Endothelial cell of umbilical vein (primary cell): ENCODE measurements at regions of chr7 and their contacts with region 1.

Region 1: GRCh38 chr7:151315038-151315655 is 26.5 kb upstream of the NUB1 start:
- DNase-seq: peak; percentile 48
- H3K4me3 ChIP-seq: no peak overlapping the region
- H3K27ac ChIP-seq: no peak overlapping the region
- H3K4me1 ChIP-seq: no peaks in the 10 kb centered on the region
- H3K27me3 ChIP-seq: peaks cover 0 to 6% of the 10 kb centered on the region in 2 experiments
- CTCF ChIP-seq: peak; percentile 71 to 74
- POLR2A ChIP-seq: no peak

Region 2: DNA sequence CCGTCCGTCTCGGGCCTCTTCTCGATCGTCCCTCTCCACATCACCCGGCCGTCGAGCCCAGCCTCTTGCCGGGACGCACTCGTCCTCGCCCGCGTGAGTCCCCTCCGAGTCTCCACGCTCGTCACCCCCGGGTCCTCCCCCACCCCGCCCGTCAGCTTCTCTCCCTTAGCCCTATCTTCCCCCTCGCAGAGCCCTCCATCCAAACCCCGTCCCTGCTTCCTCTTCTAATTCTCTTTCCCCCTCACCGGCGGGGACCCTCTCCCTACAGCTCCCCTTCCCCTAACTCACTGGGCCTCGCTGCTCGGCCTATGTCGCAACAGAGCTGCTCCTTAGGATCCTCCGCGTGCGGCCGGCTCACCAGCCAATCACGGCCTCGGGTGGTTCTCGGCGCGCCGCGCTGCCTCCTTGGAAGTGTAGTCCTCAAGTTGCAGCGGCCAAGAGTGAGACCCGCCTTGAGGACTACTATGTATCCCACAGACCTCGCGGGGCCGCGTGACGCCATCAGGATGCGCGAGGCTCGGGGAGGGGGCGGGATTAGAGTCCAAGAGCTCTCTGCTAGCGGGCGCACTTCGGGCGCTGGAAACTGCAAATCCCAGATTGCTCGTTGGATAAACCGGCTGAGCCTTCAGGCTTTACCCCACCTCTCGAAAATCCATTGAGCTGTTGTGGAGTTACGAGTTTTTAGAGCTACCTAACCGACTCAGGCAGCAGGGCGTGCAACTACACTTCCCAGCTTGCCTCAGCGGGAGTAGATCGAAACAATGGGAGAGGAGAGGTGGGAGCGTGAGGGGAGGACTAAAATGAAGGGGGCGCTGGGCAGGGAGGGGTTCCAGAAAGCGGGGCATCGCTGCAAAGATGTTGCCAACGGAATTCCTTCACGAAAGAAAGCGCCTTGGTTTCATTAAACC is 88.0 kb before region 1 on chr7 and contains the start of gene ABCF2:
- CTCF ChIA-PET with region 1: no interaction called
- POLR2A ChIA-PET with region 1: no interaction called
- dilution Hi-C with region 1: no loop called
- intact Hi-C with region 1: no loop called
- DNase-seq: peak; percentile 99
- H3K4me3 ChIP-seq: peak within 1 kb of the TSS; percentile 64 to 98 (median 82)
- H3K27ac ChIP-seq: peak within 1 kb of the TSS; percentile 16
- H3K4me1 ChIP-seq: peaks cover 22% of the 10 kb centered on the region
- H3K27me3 ChIP-seq: no peaks in the 10 kb centered on the region
- CTCF ChIP-seq: no peak
- POLR2A ChIP-seq: peak; percentile 1
- total RNA-seq, gene ABCF2: 56.7 and 61.6 TPM in 2 replicates

Region 3: GRCh38 chr7:151304856-151305255 is 10.3 kb before region 1 on chr7:
- CTCF ChIA-PET with region 1: interaction called, 28 read pairs
- POLR2A ChIA-PET with region 1: no interaction called
- dilution Hi-C with region 1: no loop called
- intact Hi-C with region 1: no loop called
- DNase-seq: no peak
- H3K4me3 ChIP-seq: peak overlapping the region in 1 of 3 experiments; percentile 20
- H3K27ac ChIP-seq: no peak overlapping the region
- H3K4me1 ChIP-seq: peaks cover 3% of the 10 kb centered on the region
- H3K27me3 ChIP-seq: peaks cover 10 to 17% of the 10 kb centered on the region in 2 experiments
- CTCF ChIP-seq: no peak
- POLR2A ChIP-seq: no peak

Region 4: DNA sequence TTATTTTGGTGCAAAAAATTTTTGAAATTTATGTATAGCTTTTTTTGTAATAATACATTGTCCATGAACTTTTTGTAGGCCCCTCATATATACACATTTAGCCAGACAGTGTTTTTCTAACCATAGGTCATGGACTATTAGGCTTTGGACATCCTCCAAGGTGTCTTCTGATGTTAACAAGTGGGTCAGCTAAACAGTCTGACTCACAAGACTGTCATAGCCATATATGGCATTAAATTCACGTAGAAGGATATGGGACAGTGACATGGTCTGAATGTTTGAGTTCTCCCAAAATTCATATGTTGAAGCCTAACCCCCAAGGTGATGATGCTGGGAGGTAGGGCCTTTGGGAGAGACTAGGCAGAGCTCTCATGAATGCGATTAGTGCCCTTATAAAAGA is 12.5 kb after region 1 on chr7:
- CTCF ChIA-PET with region 1: interaction called, 44 read pairs
- POLR2A ChIA-PET with region 1: no interaction called
- dilution Hi-C with region 1: no loop called
- intact Hi-C with region 1: no loop called
- DNase-seq: no peak
- H3K4me3 ChIP-seq: no peak overlapping the region
- H3K27ac ChIP-seq: no peak overlapping the region
- H3K4me1 ChIP-seq: no peaks in the 10 kb centered on the region
- H3K27me3 ChIP-seq: peaks cover 15 to 16% of the 10 kb centered on the region in 2 experiments
- CTCF ChIP-seq: no peak
- POLR2A ChIP-seq: no peak

Region 5: DNA sequence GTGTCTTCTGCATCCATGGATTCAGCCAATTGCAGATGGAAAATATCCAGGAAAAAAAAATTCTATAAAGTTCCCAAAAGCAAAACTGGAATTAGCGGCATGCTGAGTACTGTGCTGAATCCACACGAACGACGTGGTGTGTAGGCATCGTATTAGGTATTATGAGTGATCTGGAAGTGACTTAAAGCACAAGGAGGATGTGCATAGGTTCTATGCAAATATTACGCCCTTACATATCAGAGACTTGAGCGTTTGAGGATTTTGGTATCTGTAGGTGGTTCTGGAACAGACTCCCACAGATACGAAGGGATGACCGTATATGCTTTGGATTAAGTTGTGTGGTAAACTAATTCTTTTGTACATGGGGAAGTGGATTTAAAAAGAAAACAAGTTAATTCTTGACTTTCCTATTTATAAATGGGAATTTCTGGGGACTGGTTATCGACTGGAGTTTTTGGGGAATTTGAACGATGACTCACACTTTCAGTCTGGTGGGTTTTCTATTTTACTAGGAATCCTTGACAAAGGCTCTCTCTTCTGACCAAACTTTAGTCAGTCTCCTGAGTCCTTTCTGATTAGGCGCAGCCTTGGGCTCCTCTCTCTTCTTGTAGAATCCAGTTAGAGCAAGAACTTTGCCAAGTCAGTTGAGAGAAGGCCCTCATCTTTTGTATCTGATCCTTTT is 21.0 kb after region 1 on chr7:
- CTCF ChIA-PET with region 1: interaction called, 23 read pairs
- POLR2A ChIA-PET with region 1: interaction called, 3 read pairs
- dilution Hi-C with region 1: no loop called
- intact Hi-C with region 1: no loop called
- DNase-seq: no peak
- H3K4me3 ChIP-seq: no peak overlapping the region
- H3K27ac ChIP-seq: no peak overlapping the region
- H3K4me1 ChIP-seq: peaks cover 2% of the 10 kb centered on the region
- H3K27me3 ChIP-seq: peaks cover 14 to 19% of the 10 kb centered on the region in 2 experiments
- CTCF ChIP-seq: no peak
- POLR2A ChIP-seq: no peak

Region 6: GRCh38 chr7:151341357-151342101 is 26.4 kb after region 1 on chr7 and contains the start of gene NUB1:
- CTCF ChIA-PET with region 1: interaction called, 23 read pairs
- POLR2A ChIA-PET with region 1: interaction called, 3 read pairs
- dilution Hi-C with region 1: no loop called
- intact Hi-C with region 1: no loop called
- DNase-seq: peak; percentile 90
- H3K4me3 ChIP-seq: peak within 1 kb of the TSS; percentile 97 to 100 (median 100)
- H3K27ac ChIP-seq: peak within 1 kb of the TSS; percentile 53
- H3K4me1 ChIP-seq: peaks cover 15% of the 10 kb centered on the region
- H3K27me3 ChIP-seq: peaks cover 8 to 14% of the 10 kb centered on the region in 2 experiments
- CTCF ChIP-seq: no peak
- POLR2A ChIP-seq: no peak
- total RNA-seq, gene NUB1: 41.4 and 46.2 TPM in 2 replicates

Region 7: DNA sequence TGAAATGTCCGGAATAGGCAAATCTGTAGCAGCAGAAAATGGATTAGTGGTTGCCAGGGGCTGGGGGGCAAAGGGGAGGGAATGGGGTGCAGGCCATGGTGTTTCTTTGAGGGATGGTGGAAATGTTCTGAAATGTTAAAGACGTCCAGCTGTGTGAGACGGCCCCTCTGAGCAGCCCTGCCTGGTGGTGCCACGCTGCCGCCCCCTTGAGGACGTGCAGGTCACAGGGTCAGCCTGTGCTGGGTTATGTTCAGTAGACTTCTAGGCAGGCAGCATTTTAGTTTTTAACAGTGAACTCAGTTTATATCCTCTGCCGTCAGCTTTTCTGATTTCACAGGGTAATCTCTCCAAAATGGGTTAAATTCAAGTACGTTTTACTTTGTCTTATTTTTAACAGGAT is 35.9 kb after region 1 on chr7:
- CTCF ChIA-PET with region 1: interaction called, 92 read pairs
- POLR2A ChIA-PET with region 1: no interaction called
- dilution Hi-C with region 1: no loop called
- intact Hi-C with region 1: loop called (anchors 1 kb)
- DNase-seq: no peak
- H3K4me3 ChIP-seq: no peak overlapping the region
- H3K27ac ChIP-seq: no peak overlapping the region
- H3K4me1 ChIP-seq: no peaks in the 10 kb centered on the region
- H3K27me3 ChIP-seq: no peaks in the 10 kb centered on the region
- CTCF ChIP-seq: no peak
- POLR2A ChIP-seq: no peak